Common myeloid progenitor, CD34-positive (primary cell): ENCODE measurements at regions of chr12 and their contacts with region 1.

Region 1: GRCh38 chr12:6323340-6323994 is 13.0 kb downstream of the PLEKHG6 start:
- DNase-seq: peak; percentile 82 to 87 (median 86)
- H3K4me3 ChIP-seq: peak overlapping the region in 5 of 7 experiments; percentile 12 to 64 (median 46)
- H3K27ac ChIP-seq: peak overlapping the region; percentile 37 to 68
- H3K4me1 ChIP-seq: peaks cover 12 to 56% (median 51%) of the 10 kb centered on the region in 4 experiments
- H3K27me3 ChIP-seq: no peaks in the 10 kb centered on the region

Region 2: DNA sequence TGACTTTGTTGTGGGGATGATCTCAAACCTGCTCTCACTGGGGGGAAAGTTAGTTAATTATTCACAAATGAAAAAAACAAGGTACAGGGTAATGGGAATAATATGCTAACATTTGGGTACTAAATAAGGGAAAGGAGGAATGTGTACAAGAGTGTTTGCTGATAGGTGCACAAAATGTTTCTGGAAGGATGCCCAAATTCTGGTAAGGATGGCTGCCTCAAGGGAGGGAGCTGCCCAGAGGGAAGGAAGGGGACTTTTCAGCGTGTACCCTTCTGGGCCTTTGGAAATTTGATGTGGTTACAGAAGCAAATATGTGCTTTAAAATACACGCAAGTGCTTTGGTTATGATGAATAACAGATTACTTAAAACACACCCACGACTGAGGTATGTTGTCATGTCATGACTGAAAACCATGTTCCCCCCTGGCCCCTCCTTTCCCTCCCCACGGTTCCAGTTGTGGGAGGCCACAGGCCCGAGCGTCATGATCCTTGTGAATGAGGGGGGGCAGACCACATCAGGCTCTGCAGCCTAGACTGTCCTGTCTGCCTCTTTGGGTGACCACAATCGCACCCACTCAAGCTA is 56.2 kb before region 1 on chr12:
- CTCF ChIA-PET with region 1: no interaction called
- POLR2A ChIA-PET with region 1: no interaction called
- DNase-seq: peak in 1 of 3 donors; percentile 39
- H3K4me3 ChIP-seq: no peak overlapping the region
- H3K27ac ChIP-seq: no peak overlapping the region
- H3K4me1 ChIP-seq: peaks cover 1 to 5% (median 4%) of the 10 kb centered on the region in 4 experiments
- H3K27me3 ChIP-seq: no peaks in the 10 kb centered on the region

Region 3: GRCh38 chr12:6312529-6313325 is 10.7 kb before region 1 on chr12:
- CTCF ChIA-PET with region 1: interaction called, 23 read pairs
- POLR2A ChIA-PET with region 1: interaction called, 3 read pairs
- DNase-seq: no peak
- H3K4me3 ChIP-seq: no peak overlapping the region
- H3K27ac ChIP-seq: no peak overlapping the region
- H3K4me1 ChIP-seq: peaks cover 0 to 26% (median 20%) of the 10 kb centered on the region in 4 experiments
- H3K27me3 ChIP-seq: peaks cover 0 to 7% (median 0%) of the 10 kb centered on the region in 5 experiments

Region 4: DNA sequence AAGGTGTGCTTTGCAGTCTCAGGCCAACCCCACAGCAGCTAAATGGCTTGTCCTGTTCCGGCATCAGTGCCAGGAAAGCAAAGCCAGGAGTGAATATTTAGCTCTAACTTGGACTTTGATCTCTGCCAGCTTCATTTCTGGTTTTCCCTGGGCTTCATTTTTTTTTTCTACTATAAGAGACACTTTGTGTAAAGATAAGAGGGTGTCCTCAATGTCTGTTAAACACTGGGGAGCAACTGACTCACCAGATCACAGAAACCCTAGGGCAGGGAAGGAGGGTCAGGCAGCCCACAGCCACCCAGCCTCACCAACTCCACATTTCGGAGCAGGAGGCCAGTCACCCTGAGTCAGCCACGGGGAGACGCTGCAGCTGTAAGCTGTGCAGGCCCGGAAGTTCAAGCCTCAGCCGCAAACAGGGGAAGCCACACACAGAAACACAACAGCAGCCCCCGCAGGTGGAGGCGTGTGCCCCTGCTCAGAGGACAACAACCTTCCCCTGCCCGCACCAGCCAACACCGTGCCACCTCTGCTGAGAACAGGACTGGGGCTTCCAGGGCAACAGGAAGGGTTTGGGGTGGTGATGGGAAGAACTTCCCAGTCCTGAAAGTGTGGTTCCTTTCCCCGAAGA is 12.1 kb after region 1 on chr12:
- CTCF ChIA-PET with region 1: interaction called, 66 read pairs
- POLR2A ChIA-PET with region 1: interaction called, 12 read pairs
- DNase-seq: peak; percentile 87 to 96 (median 94)
- H3K4me3 ChIP-seq: peak overlapping the region in 6 of 7 experiments; percentile 65 to 99 (median 98)
- H3K27ac ChIP-seq: peak overlapping the region; percentile 74 to 96
- H3K4me1 ChIP-seq: peaks cover 30 to 81% (median 78%) of the 10 kb centered on the region in 4 experiments
- H3K27me3 ChIP-seq: no peaks in the 10 kb centered on the region

Region 5: DNA sequence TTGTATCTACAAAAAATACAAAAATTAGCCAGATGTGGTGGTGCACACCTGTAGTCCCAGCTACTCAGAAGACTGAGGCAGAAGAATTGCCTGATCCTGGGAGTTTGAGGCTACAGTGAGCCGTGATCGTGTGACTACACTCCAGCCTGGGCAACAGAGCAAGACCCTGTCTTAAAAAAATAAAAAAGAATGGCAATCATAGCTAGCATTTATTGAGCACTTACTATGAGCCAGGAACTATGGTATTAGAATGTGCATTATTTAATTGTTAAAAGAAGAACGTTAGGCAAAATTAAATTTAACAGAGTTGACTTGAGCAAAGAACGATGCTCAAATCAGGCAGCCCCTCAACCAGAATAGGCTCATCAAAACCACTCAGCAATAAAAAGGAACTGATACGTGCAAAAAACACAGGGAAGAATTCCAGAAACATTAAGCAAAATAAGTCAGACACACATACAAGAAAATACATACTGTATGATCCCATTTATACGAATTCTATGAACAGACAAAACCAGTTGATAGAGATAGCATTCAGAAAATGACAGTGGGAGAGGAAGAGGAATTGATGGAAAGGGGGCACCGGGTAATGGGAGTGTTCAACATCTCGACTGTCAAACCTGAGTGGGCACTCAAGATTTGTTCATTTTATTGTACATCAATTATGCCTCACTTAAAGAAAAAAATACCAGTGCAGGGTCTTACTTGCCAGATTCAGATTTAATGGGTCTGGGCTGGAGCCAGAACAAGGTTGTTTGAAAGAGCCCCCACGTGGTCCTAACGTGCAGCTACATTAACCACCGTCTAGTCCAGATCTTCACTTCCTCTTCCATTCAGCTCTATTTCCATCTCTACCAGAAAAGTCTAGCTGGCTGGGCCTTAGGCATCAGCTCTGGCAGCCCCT is 43.9 kb after region 1 on chr12:
- CTCF ChIA-PET with region 1: interaction called, 18 read pairs
- POLR2A ChIA-PET with region 1: no interaction called
- DNase-seq: peak; percentile 84 to 93 (median 92)
- H3K4me3 ChIP-seq: no peak overlapping the region
- H3K27ac ChIP-seq: no peak overlapping the region
- H3K4me1 ChIP-seq: peaks cover 8 to 61% (median 40%) of the 10 kb centered on the region in 4 experiments
- H3K27me3 ChIP-seq: no peaks in the 10 kb centered on the region

Region 6: GRCh38 chr12:6423267-6424007 is 100.0 kb after region 1 on chr12:
- CTCF ChIA-PET with region 1: interaction called, 11 read pairs
- POLR2A ChIA-PET with region 1: no interaction called
- DNase-seq: peak; percentile 91 to 96 (median 95)
- H3K4me3 ChIP-seq: no peak overlapping the region
- H3K27ac ChIP-seq: no peak overlapping the region
- H3K4me1 ChIP-seq: peaks cover 0 to 39% (median 33%) of the 10 kb centered on the region in 4 experiments
- H3K27me3 ChIP-seq: no peaks in the 10 kb centered on the region

Region 7: DNA sequence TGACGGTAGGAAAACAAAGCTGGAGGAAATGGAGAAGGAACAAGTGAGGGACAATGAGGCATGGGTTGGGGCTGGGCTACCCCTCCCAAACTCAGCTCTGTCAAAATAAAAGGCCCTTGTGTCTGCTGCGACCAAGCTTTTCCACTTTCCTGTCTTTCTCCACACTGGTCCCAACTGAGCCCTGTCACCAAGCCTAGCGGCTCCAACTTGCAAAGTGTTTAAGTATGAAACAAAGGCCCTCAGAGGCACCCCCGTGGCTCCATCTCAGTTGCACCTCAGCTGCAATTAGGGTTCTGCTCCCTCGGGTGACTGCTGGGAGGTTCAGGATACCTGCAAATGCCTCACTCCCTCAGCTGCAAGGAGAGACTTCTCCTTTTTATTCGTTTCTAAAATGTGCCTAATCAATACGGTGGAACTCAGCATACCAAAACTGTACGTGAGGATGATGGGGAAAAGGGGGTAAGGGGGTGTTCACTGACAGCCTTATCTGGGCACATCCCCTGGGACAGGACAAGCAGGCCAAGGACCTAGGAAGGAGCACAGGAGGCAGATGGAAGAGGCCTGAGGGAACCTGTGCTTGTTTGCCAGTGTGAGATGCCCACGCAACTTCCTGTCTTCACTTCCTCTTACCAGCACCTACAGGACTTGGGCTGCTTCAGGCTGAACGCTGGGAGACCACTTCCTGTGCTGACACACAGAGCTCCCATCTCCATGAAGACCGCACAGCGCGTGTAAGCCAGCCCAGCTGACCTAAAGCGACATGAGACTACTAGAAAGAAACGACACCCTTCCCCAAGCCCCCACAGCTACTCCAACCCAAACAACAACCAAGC is 138.2 kb after region 1 on chr12:
- CTCF ChIA-PET with region 1: interaction called, 35 read pairs
- POLR2A ChIA-PET with region 1: interaction called, 6 read pairs
- DNase-seq: peak; percentile 94 to 98 (median 97)
- H3K4me3 ChIP-seq: peak overlapping the region in 3 of 7 experiments; percentile 21 to 48 (median 34)
- H3K27ac ChIP-seq: peak overlapping the region; percentile 69 to 83
- H3K4me1 ChIP-seq: peaks cover 20 to 69% (median 50%) of the 10 kb centered on the region in 4 experiments
- H3K27me3 ChIP-seq: no peaks in the 10 kb centered on the region

Region 8: DNA sequence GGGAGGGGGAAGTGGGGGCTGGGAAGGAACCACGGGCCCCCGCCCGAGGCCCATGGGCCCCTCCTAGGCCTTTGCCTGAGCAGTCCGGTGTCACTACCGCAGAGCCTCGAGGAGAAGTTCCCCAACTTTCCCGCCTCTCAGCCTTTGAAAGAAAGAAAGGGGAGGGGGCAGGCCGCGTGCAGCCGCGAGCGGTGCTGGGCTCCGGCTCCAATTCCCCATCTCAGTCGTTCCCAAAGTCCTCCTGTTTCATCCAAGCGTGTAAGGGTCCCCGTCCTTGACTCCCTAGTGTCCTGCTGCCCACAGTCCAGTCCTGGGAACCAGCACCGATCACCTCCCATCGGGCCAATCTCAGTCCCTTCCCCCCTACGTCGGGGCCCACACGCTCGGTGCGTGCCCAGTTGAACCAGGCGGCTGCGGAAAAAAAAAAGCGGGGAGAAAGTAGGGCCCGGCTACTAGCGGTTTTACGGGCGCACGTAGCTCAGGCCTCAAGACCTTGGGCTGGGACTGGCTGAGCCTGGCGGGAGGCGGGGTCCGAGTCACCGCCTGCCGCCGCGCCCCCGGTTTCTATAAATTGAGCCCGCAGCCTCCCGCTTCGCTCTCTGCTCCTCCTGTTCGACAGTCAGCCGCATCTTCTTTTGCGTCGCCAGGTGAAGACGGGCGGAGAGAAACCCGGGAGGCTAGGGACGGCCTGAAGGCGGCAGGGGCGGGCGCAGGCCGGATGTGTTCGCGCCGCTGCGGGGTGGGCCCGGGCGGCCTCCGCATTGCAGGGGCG is 210.6 kb after region 1 on chr12 and contains the start of gene GAPDH:
- CTCF ChIA-PET with region 1: interaction called, 13 read pairs
- POLR2A ChIA-PET with region 1: interaction called, 4 read pairs
- DNase-seq: peak; percentile 93 to 97 (median 95)
- H3K4me3 ChIP-seq: peak within 1 kb of the TSS; percentile 83 to 96 (median 89)
- H3K27ac ChIP-seq: peak within 1 kb of the TSS; percentile 89 to 94
- H3K4me1 ChIP-seq: peaks cover 5 to 54% (median 52%) of the 10 kb centered on the region in 4 experiments
- H3K27me3 ChIP-seq: no peaks in the 10 kb centered on the region